ENCODE measurements at regions of chr2 and their contacts with region 1.

Region 1: DNA sequence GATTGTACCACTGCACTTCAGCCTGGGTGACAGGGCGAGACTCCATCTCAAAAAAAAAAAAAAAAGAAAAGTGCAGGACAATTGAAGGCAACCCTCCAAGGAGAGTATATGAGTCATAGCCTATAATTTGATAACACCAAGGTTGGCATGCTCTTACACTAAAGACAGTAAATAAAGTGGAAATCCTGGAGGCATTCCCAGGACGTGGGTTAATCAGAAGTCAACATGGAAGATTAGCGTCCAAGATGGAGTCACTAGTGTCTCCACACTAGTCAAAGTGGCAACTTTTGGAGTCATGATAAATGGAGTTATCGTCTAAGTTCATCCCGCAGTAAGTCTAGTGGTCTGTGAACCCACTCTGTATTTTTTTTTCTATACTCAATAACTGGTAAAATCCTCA is 21.2 kb upstream of the UGGT1 start:
- DNase-seq: no peak
- H3K4me3 ChIP-seq: no peak overlapping the region
- H3K27ac ChIP-seq: no peak overlapping the region
- H3K4me1 ChIP-seq: no peaks in the 10 kb centered on the region
- H3K27me3 ChIP-seq: no peaks in the 10 kb centered on the region
- CTCF ChIP-seq: no peak
- EP300 ChIP-seq: no peak
- POLR2A ChIP-seq: no peak

Region 2: DNA sequence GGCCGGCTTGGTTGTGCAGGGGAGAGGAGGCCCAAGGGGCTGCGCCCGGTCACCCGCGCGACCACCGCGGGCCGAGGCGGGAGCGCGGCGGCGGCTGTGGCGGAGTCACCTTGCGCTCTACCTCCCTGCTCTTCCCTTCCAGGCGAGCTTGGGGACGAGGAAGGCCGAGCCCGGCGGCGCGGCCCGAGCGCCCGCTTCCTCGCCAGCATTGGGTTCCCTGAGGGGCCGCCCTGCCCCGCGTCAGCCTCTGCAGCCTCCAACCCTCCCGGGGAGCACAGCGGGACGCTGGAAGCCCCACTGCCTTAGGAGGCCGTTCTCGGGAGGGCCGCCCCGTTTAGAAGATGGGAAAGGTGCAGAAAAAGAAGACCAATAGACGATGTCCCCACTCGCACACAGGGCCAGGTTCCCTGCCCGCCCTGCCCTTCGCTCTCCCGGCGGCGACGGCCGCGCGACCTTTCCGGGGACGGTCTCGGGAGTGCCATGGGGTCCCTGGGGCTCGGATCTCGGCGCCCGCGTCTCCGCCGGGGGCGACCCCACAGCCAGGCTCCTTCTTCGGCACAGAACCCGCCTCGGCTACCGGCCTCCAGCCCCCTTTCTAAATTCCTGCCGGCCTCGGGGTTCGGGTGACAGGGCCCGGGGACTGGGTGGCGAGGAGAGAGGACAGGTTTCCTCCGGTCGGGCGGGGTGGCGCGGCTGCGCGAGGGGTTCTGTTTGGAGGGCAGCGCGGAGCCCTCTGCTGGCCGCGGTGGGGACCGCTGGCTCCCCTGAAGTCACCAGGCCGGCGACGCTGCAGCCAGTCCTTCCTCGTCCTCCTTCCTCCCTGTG is 163.4 kb after region 1 on chr2:
- intact Hi-C with region 1: loop called in 1 of 4 experiments (anchors 10 kb)
- DNase-seq: peak; percentile 78 to 87 (median 83)
- H3K4me3 ChIP-seq: peak overlapping the region; percentile 45
- H3K27ac ChIP-seq: peak overlapping the region; percentile 2 to 61
- H3K4me1 ChIP-seq: no peaks in the 10 kb centered on the region
- H3K27me3 ChIP-seq: no peaks in the 10 kb centered on the region
- CTCF ChIP-seq: peak; percentile 75 to 85 (median 82)
- EP300 ChIP-seq: no peak
- POLR2A ChIP-seq: no peak